Activated B cell treated with CpG ODN at 0.5 μM for 24 hours (primary cell): ENCODE measurements at regions of chr21 and their contacts with region 1.

Region 1: DNA sequence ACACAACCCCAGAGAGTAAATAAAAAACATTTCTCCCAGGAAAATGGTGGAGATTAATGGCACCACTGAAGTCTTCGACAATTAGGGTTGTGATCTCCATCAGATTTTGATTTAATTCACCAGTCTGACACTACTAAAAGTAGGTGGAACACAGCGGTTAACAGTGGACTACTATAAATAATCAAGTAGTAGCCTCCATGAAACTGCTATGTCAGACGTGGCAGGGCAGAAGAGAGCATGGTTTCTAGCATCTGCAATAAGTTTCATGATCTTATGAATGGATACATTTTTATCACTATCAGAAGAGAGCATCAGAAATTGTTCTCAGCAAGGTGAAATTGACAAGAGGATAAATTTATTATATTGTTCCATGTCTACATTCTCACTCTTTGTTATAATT is 1706.6 kb downstream of the MRPL39 start:
- DNase-seq: no peak
- ATAC-seq: no peak
- H3K4me3 Mint-ChIP-seq: no peak overlapping the region
- H3K27ac Mint-ChIP-seq: no peak overlapping the region
- H3K4me1 Mint-ChIP-seq: no peaks in the 10 kb centered on the region
- H3K27me3 Mint-ChIP-seq: no peaks in the 10 kb centered on the region
- CTCF ChIP-seq: no peak

Region 2: DNA sequence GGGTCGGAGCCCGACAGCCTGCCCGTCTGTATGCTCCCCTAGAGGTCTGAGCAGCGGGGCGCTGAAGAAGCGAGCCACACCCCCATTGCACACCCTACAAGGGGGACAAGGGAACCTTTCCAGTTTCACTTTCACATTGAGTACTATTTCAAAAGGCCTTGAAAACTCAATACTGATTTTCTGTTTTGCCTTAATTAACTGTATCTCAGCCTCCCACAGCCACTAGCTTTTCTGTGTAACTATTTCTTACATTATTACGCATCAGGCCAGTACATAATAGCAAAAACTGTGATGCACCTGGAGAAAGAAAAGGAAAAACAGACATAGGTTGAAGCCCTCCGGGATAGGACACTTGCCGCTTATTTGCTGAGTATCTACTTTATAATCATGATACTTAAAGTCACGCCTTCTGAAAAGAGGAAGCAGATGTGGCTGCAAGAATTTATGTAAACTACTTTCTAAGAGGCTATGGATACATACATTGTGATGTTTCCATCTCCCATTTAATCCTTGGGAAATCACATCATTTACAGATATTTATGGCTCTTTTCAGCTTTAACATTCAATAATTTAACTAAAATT is 12.9 kb before region 1 on chr21:
- CTCF ChIA-PET with region 1: no interaction called
- POLR2A ChIA-PET with region 1: no interaction called
- intact Hi-C with region 1: loop called (anchors 2 kb)
- DNase-seq: peak; percentile 37
- ATAC-seq: peak; percentile 90
- H3K4me3 Mint-ChIP-seq: peak overlapping the region; percentile 86
- H3K27ac Mint-ChIP-seq: peak overlapping the region; percentile 92
- H3K4me1 Mint-ChIP-seq: peaks cover 15% of the 10 kb centered on the region
- H3K27me3 Mint-ChIP-seq: no peaks in the 10 kb centered on the region
- CTCF ChIP-seq: no peak

Region 3: GRCh38 chr21:23955135-23955843 is 54.6 kb after region 1 on chr21:
- CTCF ChIA-PET with region 1: no interaction called
- POLR2A ChIA-PET with region 1: no interaction called
- intact Hi-C with region 1: loop called (anchors 5 kb)
- DNase-seq: no peak
- ATAC-seq: no peak
- H3K4me3 Mint-ChIP-seq: peak overlapping the region; percentile 68
- H3K27ac Mint-ChIP-seq: peak overlapping the region; percentile 50
- H3K4me1 Mint-ChIP-seq: peaks cover 44% of the 10 kb centered on the region
- H3K27me3 Mint-ChIP-seq: no peaks in the 10 kb centered on the region
- CTCF ChIP-seq: no peak